ENCODE measurements at regions of chr19 and their contacts with region 1.

Region 1: DNA sequence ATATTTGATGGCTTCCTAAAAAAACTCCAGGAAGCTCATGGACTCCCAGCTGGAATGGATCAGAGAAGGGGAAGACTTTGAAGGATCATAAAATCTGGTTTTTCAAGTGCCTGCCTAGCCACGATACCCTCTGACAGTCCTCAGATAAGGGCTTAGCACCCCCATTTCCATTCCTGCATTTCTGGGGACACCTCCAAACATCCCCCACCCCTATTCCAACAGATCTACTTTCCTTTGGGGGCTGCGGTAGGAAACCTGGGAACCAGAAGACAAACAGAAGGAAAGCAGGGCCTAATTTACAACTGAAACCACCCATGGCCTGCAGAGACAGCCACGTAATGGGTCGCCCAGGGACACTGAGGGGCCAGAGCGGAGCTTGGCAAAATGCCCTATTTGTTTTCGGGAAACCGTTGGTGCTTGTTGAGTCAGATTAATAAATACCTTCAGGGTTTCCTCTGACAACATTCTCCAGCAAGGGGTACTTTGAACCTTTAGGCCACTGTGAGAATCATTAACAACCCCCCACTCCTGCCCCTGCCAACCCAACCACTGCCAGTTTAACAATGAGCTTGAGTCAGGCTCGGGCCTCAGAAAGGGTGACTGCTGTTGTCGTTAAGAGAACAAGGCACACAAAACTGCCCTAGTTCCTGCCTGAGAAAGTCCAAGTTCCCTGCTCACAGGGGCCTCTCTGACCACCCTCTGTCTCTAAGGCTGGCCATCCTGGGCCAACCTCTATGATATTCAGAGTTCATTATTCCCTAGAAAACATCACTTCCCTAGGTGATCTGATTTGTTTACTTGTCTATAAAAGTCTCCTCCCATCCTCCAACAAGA is 23.5 kb downstream of the RHPN2 start:
- DNase-seq: peak; percentile 100
- ATAC-seq: peak; percentile 91
- H3K4me3 ChIP-seq: peak overlapping the region in 2 of 3 experiments; percentile 28 to 56; a peak in 5 of 6 replicates
- H3K27ac ChIP-seq: peak overlapping the region; percentile 100
- H3K4me1 ChIP-seq: peaks cover 74% of the 10 kb centered on the region
- H3K27me3 ChIP-seq: no peaks in the 10 kb centered on the region
- CTCF ChIP-seq: no peak
- EP300 ChIP-seq: peak; percentile 90 to 95; a peak in 3 of 4 replicates
- POLR2A ChIP-seq: peak; percentile 65 to 94; a peak in 3 of 4 replicates
- RAD21 ChIP-seq: no peak; the same call in 1 of the 2 replicates

Region 2: DNA sequence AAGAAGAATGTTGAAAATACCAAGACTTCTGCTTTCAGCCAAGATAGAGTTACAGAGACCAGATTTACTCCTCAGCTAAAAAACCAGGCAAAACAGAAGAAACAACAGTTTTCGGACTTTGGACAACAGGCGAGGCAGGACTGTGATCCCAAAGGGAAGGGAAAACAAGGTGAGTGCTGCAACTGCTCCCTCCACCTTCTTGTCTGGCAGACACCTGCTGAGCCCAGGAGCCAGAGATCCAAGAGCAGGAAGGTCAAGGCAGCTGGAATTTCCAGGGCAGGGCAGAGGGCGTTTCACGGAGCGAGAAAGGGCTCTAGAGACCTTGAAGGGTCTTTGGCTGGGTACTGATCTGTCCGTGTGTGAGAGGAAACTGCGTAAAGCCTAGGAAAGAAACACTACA is 138.8 kb before region 1 on chr19:
- CTCF ChIA-PET with region 1: no interaction called
- POLR2A ChIA-PET with region 1: no interaction called
- in situ Hi-C with region 1: no loop called
- intact Hi-C with region 1: no loop called
- DNase-seq: no peak
- ATAC-seq: no peak
- H3K4me3 ChIP-seq: no peak overlapping the region
- H3K27ac ChIP-seq: no peak overlapping the region
- H3K4me1 ChIP-seq: peaks cover 7% of the 10 kb centered on the region
- H3K27me3 ChIP-seq: no peaks in the 10 kb centered on the region
- CTCF ChIP-seq: no peak
- EP300 ChIP-seq: no peak
- POLR2A ChIP-seq: no peak
- RAD21 ChIP-seq: no peak

Region 3: GRCh38 chr19:33022472-33023116 is 18.6 kb before region 1 on chr19:
- CTCF ChIA-PET with region 1: no interaction called
- POLR2A ChIA-PET with region 1: interaction called, 53 read pairs
- in situ Hi-C with region 1: no loop called
- intact Hi-C with region 1: no loop called
- DNase-seq: no peak
- ATAC-seq: no peak
- H3K4me3 ChIP-seq: no peak overlapping the region
- H3K27ac ChIP-seq: no peak overlapping the region
- H3K4me1 ChIP-seq: peaks cover 48% of the 10 kb centered on the region
- H3K27me3 ChIP-seq: no peaks in the 10 kb centered on the region
- CTCF ChIP-seq: peak; percentile 28; the same call in 1 of the 2 replicates
- EP300 ChIP-seq: no peak
- POLR2A ChIP-seq: no peak
- RAD21 ChIP-seq: no peak

Region 4: GRCh38 chr19:33029746-33030303 is 11.4 kb before region 1 on chr19:
- CTCF ChIA-PET with region 1: no interaction called
- POLR2A ChIA-PET with region 1: interaction called, 53 read pairs
- in situ Hi-C with region 1: no loop called
- intact Hi-C with region 1: no loop called
- DNase-seq: no peak
- ATAC-seq: no peak
- H3K4me3 ChIP-seq: no peak overlapping the region
- H3K27ac ChIP-seq: no peak overlapping the region
- H3K4me1 ChIP-seq: peaks cover 24% of the 10 kb centered on the region
- H3K27me3 ChIP-seq: no peaks in the 10 kb centered on the region
- CTCF ChIP-seq: no peak
- EP300 ChIP-seq: no peak
- POLR2A ChIP-seq: no peak
- RAD21 ChIP-seq: no peak

Region 5: DNA sequence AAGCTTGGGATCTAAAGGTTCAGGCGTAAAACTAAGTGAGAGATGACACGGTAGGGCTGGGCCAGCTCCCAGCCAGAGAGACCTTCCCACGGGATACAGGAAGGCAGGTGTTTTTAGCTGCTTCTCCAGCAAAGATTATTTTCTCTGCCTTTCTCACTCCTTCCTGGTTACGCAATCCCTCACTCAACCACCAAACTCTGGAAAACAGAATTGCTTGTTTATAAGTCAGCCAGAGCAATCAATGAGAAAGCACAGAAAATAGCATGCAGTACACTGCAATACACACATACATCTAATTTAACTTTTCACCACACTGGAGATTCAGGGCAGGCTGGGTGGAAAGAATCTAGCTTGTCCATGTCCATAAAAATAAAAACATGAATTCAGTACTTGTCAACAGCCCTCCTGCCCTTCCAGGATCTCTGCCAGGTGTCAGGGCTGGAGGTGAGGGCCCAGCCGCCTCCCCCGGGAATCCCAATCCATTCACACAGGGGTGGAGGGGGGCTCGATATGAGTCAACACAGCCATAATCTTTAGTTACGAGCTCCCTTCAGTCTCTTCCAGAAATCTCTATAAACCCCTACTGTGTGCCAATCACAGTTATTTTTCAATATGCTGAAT is 11.3 kb after region 1 on chr19:
- CTCF ChIA-PET with region 1: no interaction called
- POLR2A ChIA-PET with region 1: interaction called, 34 read pairs
- in situ Hi-C with region 1: no loop called
- intact Hi-C with region 1: no loop called
- DNase-seq: peak; percentile 60
- ATAC-seq: peak; percentile 51
- H3K4me3 ChIP-seq: no peak overlapping the region; a peak in 1 of 6 replicates
- H3K27ac ChIP-seq: peak overlapping the region; percentile 46
- H3K4me1 ChIP-seq: peaks cover 73% of the 10 kb centered on the region
- H3K27me3 ChIP-seq: no peaks in the 10 kb centered on the region
- CTCF ChIP-seq: no peak
- EP300 ChIP-seq: peak in 1 of 2 experiments; percentile 51; a peak in 1 of 4 replicates
- POLR2A ChIP-seq: no peak
- RAD21 ChIP-seq: no peak